Ascending aorta (tissue), 2 donors: ENCODE measurements at regions of chr7 and their contacts with region 1.

Region 1: GRCh38 chr7:26052721-26053120 is 99.3 kb upstream of the NFE2L3 start:
- DNase-seq: no peak
- H3K4me3 ChIP-seq: no peak overlapping the region
- H3K27ac ChIP-seq: no peak overlapping the region
- H3K4me1 ChIP-seq: no peaks in the 10 kb centered on the region
- H3K27me3 ChIP-seq: no peaks in the 10 kb centered on the region
- CTCF ChIP-seq: no peak

Region 2: DNA sequence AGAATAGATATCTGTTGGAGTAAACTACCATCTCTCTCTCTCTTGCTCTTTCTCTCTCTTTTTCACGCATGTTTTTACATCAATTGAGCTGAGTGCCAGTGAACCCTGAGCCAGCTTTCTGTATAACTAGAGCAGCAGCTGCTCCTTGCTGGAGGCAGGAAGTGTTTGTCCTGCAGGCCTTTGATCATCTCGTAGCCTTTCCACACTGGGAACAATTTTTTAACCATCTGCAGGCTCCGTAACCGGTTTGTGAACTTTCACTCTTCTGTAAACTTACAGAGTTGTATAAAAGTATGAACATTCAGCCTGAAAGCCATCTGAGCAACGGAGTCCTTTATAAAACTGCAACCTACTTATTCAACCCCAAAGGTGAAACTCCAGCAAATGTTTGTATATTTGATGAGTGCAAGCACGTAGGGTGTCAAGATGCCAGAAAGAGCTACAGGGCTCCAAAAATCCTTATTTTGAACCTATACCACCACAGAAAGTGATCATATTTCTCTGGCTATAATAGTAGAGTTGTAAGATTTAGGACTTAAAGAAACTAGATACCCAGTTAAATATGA is 63.5 kb before region 1 on chr7:
- intact Hi-C with region 1: loop called (anchors 10 kb)
- DNase-seq: no peak
- H3K4me3 ChIP-seq: no peak overlapping the region
- H3K27ac ChIP-seq: no peak overlapping the region
- H3K4me1 ChIP-seq: no peaks in the 10 kb centered on the region
- H3K27me3 ChIP-seq: no peaks in the 10 kb centered on the region
- CTCF ChIP-seq: no peak